ENCODE measurements at regions of chr5 and their contacts with region 1.

Region 1: DNA sequence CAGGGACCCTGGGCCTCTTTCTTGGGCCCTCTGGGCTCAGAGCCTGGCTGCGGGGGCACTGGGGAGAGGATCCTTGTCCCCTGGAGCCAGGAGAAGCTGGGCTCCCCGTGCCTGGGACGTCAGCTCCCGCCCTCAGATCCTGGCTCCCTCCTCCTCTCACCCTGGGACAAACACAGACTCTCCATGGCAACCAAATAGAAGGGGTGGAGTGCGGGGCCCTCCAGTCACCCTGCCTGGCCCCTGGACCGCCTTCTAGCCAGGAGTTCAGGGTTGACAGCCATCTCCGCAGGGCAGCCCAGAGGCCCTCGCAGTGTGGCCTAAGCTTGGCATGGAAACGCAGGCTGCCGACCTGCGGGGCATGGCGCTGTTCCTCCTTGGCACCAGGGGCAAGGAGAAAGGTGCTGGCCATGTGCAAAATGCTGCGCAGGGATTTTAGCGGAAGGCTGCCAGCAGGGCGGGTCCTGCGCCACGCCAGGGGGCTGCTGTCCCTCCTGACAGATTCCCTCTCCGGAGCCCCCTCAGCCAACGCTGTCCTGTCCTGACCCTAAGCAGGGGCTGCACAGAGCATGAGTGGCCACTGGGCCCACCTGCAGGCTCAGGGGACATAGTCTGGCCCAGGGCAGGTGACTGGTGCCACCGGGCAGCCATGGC is 1.0 kb downstream of the ZDHHC11 start:
- DNase-seq: no peak
- H3K4me3 ChIP-seq: no peak overlapping the region
- H3K4me1 ChIP-seq: no peaks in the 10 kb centered on the region
- H3K27me3 ChIP-seq: no peaks in the 10 kb centered on the region

Region 2: DNA sequence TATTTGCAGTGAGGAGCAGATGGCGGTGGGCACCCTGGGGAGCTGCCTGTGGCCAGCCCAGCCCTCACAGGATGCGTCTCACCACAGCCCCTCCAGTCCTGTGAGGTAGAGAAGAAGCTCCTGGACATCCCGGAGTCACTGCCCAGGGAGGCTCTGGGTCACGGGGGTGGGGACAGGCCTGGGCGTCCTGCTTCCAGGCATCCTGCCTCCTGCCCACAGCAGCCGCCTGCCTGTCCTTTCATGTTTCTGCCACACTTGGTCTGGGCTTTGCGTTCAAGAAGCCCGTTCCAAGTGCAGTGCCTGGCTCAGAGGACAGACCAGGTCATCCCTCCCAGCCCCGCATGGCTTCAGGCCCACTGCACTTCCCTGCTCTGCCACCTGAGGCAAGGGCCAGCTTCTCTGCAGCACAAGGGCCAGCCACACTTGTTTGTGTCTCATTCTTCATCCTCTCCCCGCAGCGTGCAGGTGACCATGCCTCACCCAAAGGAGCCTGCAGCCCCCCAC is 103.5 kb before region 1 on chr5:
- in situ Hi-C with region 1: loop called (anchors 5 kb)
- DNase-seq: no peak
- H3K4me3 ChIP-seq: no peak overlapping the region
- H3K4me1 ChIP-seq: no peaks in the 10 kb centered on the region
- H3K27me3 ChIP-seq: no peaks in the 10 kb centered on the region